ENCODE measurements at regions of chr22 and their contacts with region 1.

Region 1: DNA sequence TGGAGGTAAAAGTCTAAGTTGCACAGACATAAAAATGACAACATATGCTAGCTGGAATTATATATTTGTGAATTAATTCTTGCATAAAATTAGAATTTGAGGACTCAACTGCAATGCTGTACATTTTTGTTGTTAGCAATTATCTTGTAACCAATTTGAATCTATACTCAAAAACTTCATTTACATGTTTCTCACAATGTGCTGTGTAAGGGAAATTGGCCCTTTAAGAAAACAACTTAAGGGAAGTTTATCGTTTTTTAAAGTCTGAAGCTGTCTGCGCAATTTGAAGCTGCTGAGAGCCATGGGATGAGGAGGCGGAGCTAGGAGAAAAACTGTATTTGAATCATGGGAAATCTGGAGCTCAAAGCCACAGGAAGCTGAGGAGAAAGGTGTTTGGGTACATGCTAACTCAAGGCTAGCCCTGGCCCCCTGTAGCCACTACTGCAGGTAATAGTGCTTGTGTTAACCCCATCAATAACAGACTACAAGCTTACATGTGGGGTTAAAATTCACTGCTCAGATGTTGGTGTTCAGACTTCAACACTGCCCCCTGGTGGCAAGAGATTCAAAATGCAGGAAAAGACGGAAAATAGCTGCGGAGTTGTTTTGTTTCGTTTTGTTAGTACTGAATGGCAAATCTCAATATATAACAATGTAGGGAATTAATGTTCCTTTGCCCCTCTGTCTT is 126.1 kb downstream of the BRD1 start:
- DNase-seq: peak in 1 of 2 experiments; percentile 52
- H3K4me3 ChIP-seq: no peak overlapping the region
- H3K27ac ChIP-seq: no peak overlapping the region
- H3K4me1 ChIP-seq: no peaks in the 10 kb centered on the region
- H3K27me3 ChIP-seq: no peaks in the 10 kb centered on the region
- CTCF ChIP-seq: peak in 2 of 3 experiments; percentile 28 to 71; a peak in 2 of 4 replicates
- EP300 ChIP-seq: no peak
- POLR2A ChIP-seq: no peak
- RAD21 ChIP-seq: peak; percentile 42 to 45; a peak in 3 of 4 replicates

Region 2: GRCh38 chr22:49690454-49690853 is 11.1 kb before region 1 on chr22:
- CTCF ChIA-PET with region 1: interaction called, 23 read pairs
- POLR2A ChIA-PET with region 1: no interaction called
- DNase-seq: no peak
- H3K4me3 ChIP-seq: no peak overlapping the region
- H3K27ac ChIP-seq: no peak overlapping the region
- H3K4me1 ChIP-seq: no peaks in the 10 kb centered on the region; a peak in 1 of 7 replicates
- H3K27me3 ChIP-seq: no peaks in the 10 kb centered on the region
- CTCF ChIP-seq: no peak
- EP300 ChIP-seq: no peak
- POLR2A ChIP-seq: no peak
- RAD21 ChIP-seq: no peak

Region 3: GRCh38 chr22:49717322-49717919 is 15.9 kb after region 1 on chr22:
- CTCF ChIA-PET with region 1: interaction called, 12 read pairs
- POLR2A ChIA-PET with region 1: no interaction called
- DNase-seq: no peak
- H3K4me3 ChIP-seq: no peak overlapping the region
- H3K27ac ChIP-seq: no peak overlapping the region
- H3K4me1 ChIP-seq: peaks cover 0 to 5% (median 0%) of the 10 kb centered on the region in 4 experiments; a peak in 2 of 7 replicates
- H3K27me3 ChIP-seq: no peaks in the 10 kb centered on the region; a peak in 1 of 7 replicates
- CTCF ChIP-seq: no peak
- EP300 ChIP-seq: no peak
- POLR2A ChIP-seq: no peak
- RAD21 ChIP-seq: no peak

Region 4: GRCh38 chr22:49815641-49816071 is 114.1 kb after region 1 on chr22:
- CTCF ChIA-PET with region 1: no interaction called
- POLR2A ChIA-PET with region 1: no interaction called
- DNase-seq: no peak
- H3K4me3 ChIP-seq: no peak overlapping the region
- H3K27ac ChIP-seq: no peak overlapping the region
- H3K4me1 ChIP-seq: no peaks in the 10 kb centered on the region
- H3K27me3 ChIP-seq: no peaks in the 10 kb centered on the region
- CTCF ChIP-seq: no peak
- EP300 ChIP-seq: no peak
- POLR2A ChIP-seq: no peak
- RAD21 ChIP-seq: no peak